ENCODE measurements at regions of chr6 and their contacts with region 1.

Region 1: DNA sequence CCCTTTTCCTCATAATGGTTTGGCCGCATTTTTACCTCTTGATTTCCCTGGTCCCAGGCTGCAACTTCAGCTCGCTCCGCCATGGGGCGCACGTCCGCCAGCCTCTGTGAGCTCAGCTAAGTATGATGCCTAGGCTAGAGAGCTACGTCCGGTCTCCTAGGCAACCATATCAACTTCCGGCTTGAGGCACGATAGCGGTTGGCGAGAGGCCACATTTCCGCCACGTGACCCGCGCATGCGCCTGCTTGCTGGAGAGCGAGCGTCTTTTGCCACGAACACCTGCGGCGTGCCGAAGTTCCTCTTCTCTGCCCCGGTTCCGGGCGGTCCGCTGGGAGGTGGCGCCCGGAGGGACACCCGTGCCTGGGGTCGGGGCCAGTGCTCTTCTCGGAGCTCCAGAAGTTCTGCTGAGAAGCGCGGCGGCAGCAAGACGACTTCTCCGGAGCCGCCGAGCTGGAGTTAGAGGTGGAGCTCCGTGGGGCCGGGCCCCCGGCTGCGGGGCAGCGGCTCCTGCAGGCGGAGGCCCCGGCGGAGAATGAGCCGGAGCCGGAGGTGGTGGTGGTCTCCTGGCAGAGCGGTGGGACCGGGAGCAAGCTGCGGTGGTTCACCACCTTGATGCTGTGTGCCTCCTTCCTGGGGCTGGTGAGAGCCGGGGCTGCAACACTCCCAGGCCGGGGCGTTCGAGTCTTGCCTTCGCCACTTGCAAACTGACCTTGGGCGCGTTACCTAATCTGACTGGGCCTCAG is 172.0 kb downstream of the SLC16A10 start:
- DNase-seq: peak; percentile 95 to 100 (median 99)
- ATAC-seq: peak; percentile 96 to 98 (median 96)
- H3K4me3 ChIP-seq: peak overlapping the region; percentile 70 to 74
- H3K4me3 Mint-ChIP-seq: peak overlapping the region; percentile 66 to 85 (median 81)
- H3K27ac ChIP-seq: peak overlapping the region; percentile 85
- H3K27ac Mint-ChIP-seq: peak overlapping the region; percentile 83 to 84
- H3K4me1 ChIP-seq: peaks cover 5 to 21% of the 10 kb centered on the region in 2 experiments
- H3K4me1 Mint-ChIP-seq: peaks cover 30 to 38% (median 34%) of the 10 kb centered on the region in 3 donors
- H3K27me3 ChIP-seq: peaks cover 0 to 2% of the 10 kb centered on the region in 2 experiments
- H3K27me3 Mint-ChIP-seq: peaks cover 0 to 8% of the 10 kb centered on the region in 2 donors

Region 2: DNA sequence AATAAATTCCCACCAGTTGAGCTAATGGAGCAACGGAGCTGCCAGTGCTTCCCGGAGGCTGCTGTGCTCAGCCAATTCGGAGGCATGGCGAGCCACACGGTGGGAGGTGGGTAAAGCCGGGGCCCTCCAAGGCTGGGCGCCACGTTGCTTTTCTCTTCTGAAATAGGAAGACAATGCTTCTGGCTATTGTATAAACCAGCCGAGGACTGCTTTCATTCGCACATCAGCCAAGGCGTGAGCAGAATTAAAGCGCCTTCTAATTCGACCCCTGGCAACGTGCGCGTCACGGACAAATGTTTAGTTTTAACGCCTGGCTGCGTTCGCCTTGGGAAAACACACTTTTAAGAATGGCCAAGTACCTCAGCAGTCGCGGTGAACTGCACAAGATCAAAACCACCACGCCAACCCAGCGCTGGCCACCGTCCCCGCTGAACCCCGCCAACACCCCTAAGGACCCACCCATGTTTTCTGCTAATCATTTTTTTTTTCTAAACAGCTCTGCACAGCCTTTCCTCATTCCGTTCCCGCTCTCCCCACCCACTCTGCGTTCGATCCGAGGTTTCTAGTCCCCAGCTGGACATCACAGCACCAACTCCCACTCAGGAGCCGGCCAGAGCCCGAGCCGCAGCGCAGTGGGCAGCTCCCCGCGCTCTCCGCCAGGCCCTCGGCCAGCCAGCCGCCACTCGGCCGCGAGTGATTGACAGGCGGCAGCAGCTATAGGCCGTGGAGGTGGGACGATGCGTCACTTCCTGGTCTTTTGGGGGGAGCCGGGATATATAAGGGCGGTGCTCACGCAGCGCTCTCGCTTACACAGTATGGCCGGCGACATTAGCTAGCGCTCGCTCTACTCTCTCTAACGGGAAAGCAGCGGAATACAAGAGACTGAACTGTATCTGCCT is 385.0 kb before region 1 on chr6 and contains the start of gene AMD1:
- CTCF ChIA-PET with region 1: interaction called in 1 of 2 experiments, 8 read pairs
- POLR2A ChIA-PET with region 1: interaction called in 1 of 2 experiments, 14 read pairs
- DNase-seq: peak; percentile 79 to 98 (median 95)
- ATAC-seq: peak; percentile 78 to 80 (median 78)
- H3K4me3 ChIP-seq: peak within 1 kb of the TSS; percentile 91 to 97
- H3K4me3 Mint-ChIP-seq: peak within 1 kb of the TSS; percentile 97 to 99 (median 98)
- H3K27ac ChIP-seq: peak within 1 kb of the TSS; percentile 89
- H3K27ac Mint-ChIP-seq: peak within 1 kb of the TSS; percentile 98
- H3K4me1 ChIP-seq: peaks cover 20 to 28% of the 10 kb centered on the region in 2 experiments
- H3K4me1 Mint-ChIP-seq: peaks cover 28 to 40% (median 32%) of the 10 kb centered on the region in 3 donors
- H3K27me3 ChIP-seq: no peaks in the 10 kb centered on the region
- H3K27me3 Mint-ChIP-seq: no peaks in the 10 kb centered on the region
- total RNA-seq, gene AMD1: 54.8 to 117 (median 57.6) TPM

Region 3: DNA sequence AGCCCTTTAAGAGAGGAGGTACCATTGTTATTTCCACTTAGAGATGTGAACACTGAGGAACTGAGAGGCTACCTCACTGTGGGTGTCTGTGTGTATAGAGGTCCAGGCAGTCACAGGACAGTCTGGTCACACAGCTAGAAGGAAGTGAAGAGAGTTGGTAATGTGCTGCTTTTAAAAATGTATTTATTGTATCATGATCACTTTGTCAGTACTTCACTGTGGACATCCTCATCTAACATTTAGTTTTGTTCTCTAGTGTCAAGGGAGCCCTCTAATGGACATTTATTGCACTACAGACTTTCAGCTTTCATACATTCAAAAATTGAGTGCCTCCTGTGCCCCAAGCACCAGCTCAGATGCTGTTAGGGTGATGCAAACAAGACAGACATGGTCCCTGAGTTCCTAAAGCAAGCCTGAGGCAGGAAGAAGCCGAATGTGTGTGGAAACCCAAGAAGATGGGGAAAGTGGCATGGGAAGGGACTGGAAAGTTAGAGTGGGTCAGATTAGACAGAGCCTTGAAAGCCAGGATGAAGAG is 49.0 kb before region 1 on chr6:
- CTCF ChIA-PET with region 1: no interaction called
- POLR2A ChIA-PET with region 1: no interaction called
- DNase-seq: peak in 15 of 35 experiments; percentile 1 to 75 (median 6)
- ATAC-seq: peak; percentile 64 to 80 (median 71)
- H3K4me3 ChIP-seq: no peak overlapping the region
- H3K4me3 Mint-ChIP-seq: no peak overlapping the region
- H3K27ac ChIP-seq: no peak overlapping the region
- H3K27ac Mint-ChIP-seq: no peak overlapping the region
- H3K4me1 ChIP-seq: no peaks in the 10 kb centered on the region
- H3K4me1 Mint-ChIP-seq: peaks cover 0 to 13% (median 0%) of the 10 kb centered on the region in 3 donors
- H3K27me3 ChIP-seq: no peaks in the 10 kb centered on the region
- H3K27me3 Mint-ChIP-seq: no peaks in the 10 kb centered on the region

Region 4: GRCh38 chr6:111478749-111479148 is 219.5 kb after region 1 on chr6:
- CTCF ChIA-PET with region 1: interaction called, 9 to 74 read pairs
- POLR2A ChIA-PET with region 1: interaction called in 1 of 2 experiments, 16 read pairs
- DNase-seq: peak in 1 of 35 experiments; percentile 63
- ATAC-seq: peak in 2 of 4 experiments; percentile 9 to 20
- H3K4me3 ChIP-seq: no peak overlapping the region
- H3K4me3 Mint-ChIP-seq: no peak overlapping the region
- H3K27ac ChIP-seq: no peak overlapping the region
- H3K27ac Mint-ChIP-seq: peak overlapping the region in 1 of 2 donors; percentile 69
- H3K4me1 ChIP-seq: peaks cover 5 to 8% of the 10 kb centered on the region in 2 experiments
- H3K4me1 Mint-ChIP-seq: peaks cover 39 to 48% (median 44%) of the 10 kb centered on the region in 3 donors
- H3K27me3 ChIP-seq: no peaks in the 10 kb centered on the region
- H3K27me3 Mint-ChIP-seq: no peaks in the 10 kb centered on the region

Region 5: GRCh38 chr6:111605100-111605751 is 346.0 kb after region 1 on chr6:
- CTCF ChIA-PET with region 1: interaction called, 3 to 15 read pairs
- POLR2A ChIA-PET with region 1: no interaction called
- DNase-seq: peak in 28 of 35 experiments; percentile 2 to 41 (median 18)
- ATAC-seq: peak; percentile 51 to 70 (median 58)
- H3K4me3 ChIP-seq: peak overlapping the region; percentile 78 to 83
- H3K4me3 Mint-ChIP-seq: peak overlapping the region; percentile 88 to 91 (median 89)
- H3K27ac ChIP-seq: peak overlapping the region; percentile 88
- H3K27ac Mint-ChIP-seq: peak overlapping the region; percentile 91 to 95
- H3K4me1 ChIP-seq: peaks cover 8 to 33% of the 10 kb centered on the region in 2 experiments
- H3K4me1 Mint-ChIP-seq: peaks cover 54 to 56% (median 55%) of the 10 kb centered on the region in 3 donors
- H3K27me3 ChIP-seq: no peaks in the 10 kb centered on the region
- H3K27me3 Mint-ChIP-seq: no peaks in the 10 kb centered on the region

Region 6: DNA sequence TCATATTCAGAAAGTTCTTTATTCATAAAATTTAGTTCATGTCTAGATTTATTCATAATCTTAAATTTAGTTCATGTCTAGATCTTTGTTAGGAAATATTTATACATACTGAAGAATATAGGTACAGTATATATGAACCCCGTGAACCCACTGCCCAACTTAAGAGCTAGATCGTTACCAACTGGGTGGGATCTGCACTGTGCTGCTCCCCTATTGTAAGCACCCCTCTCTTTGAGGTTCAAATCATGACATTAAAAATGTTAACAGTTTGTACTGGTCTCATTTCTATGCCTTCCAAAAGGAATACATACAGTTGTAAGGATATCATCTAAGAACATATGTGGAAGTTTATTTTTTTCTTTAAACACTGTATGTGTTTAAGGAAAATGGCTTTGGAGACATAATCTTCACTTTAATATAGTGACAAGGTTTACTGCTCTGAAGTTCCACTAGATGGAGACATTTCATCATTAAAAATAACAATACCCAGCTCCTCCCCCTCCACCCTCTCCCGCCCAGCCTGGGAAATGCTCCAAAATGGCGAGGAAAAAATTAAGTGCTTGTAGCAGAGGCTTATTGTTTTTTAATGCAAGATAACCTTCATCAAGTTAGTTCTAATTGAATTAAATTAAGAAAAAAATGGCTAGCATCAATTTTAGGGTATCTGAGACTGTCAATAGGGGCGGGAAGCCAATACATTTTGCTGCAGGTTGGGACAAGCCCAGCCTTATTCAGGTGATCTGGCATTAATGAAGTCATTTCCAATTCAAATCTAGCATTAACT is 450.5 kb after region 1 on chr6:
- CTCF ChIA-PET with region 1: interaction called in 1 of 2 experiments, 10 read pairs
- POLR2A ChIA-PET with region 1: no interaction called
- DNase-seq: peak in 34 of 35 experiments; percentile 14 to 83 (median 54)
- ATAC-seq: peak; percentile 81 to 86 (median 83)
- H3K4me3 ChIP-seq: no peak overlapping the region
- H3K4me3 Mint-ChIP-seq: peak overlapping the region in 1 of 3 donors; percentile 30
- H3K27ac ChIP-seq: peak overlapping the region; percentile 59
- H3K27ac Mint-ChIP-seq: peak overlapping the region; percentile 81 to 87
- H3K4me1 ChIP-seq: peaks cover 37 to 42% of the 10 kb centered on the region in 2 experiments
- H3K4me1 Mint-ChIP-seq: peaks cover 50 to 70% (median 53%) of the 10 kb centered on the region in 3 donors
- H3K27me3 ChIP-seq: no peaks in the 10 kb centered on the region
- H3K27me3 Mint-ChIP-seq: no peaks in the 10 kb centered on the region

Region 7: GRCh38 chr6:112163295-112164257 is 904.3 kb after region 1 on chr6:
- CTCF ChIA-PET with region 1: interaction called, 6 to 13 read pairs
- POLR2A ChIA-PET with region 1: interaction called in 1 of 2 experiments, 8 read pairs
- DNase-seq: peak; percentile 42 to 82 (median 68)
- ATAC-seq: peak; percentile 91 to 98 (median 96)
- H3K4me3 ChIP-seq: peak overlapping the region in 1 of 2 donors; percentile 5
- H3K4me3 Mint-ChIP-seq: peak overlapping the region; percentile 34 to 56 (median 55)
- H3K27ac ChIP-seq: no peak overlapping the region
- H3K27ac Mint-ChIP-seq: peak overlapping the region; percentile 19 to 54
- H3K4me1 ChIP-seq: peaks cover 2 to 8% of the 10 kb centered on the region in 2 experiments
- H3K4me1 Mint-ChIP-seq: peaks cover 14 to 15% (median 14%) of the 10 kb centered on the region in 3 donors
- H3K27me3 ChIP-seq: peaks cover 0 to 10% of the 10 kb centered on the region in 2 experiments
- H3K27me3 Mint-ChIP-seq: peaks cover 44 to 51% of the 10 kb centered on the region in 2 donors